ENCODE measurements at regions of chr2 and their contacts with region 1.

Region 1: GRCh38 chr2:75403991-75404428 is 156.7 kb downstream of the EVA1A start:
- DNase-seq: no peak

Region 2: DNA sequence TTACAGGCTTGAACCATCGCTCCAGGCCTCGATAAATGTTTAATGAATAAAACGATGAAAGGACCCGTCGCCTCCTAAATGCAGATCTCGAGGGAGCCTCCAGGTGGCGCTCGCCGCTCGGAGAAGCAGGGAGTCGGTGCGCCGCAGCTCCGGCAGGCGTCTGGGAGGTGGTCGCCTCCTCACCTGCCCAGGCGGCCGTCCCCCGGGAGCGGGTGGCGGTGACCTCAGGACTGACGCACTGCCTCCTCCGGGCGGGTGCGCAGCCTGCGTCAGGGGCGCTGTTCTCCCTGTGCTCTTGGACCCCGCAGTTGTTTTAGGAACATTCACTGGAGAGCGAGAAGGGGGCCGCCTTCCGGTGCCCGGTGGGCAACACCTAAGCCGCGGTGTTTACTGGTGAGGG is 484.2 kb before region 1 on chr2:
- intact Hi-C with region 1: loop called (anchors 10 kb)
- DNase-seq: peak; percentile 89

Region 3: GRCh38 chr2:75416420-75417342 is 12.7 kb after region 1 on chr2:
- intact Hi-C with region 1: no loop called
- DNase-seq: no peak

Region 4: GRCh38 chr2:75539955-75540716 is 136.1 kb after region 1 on chr2:
- intact Hi-C with region 1: no loop called
- DNase-seq: no peak